ENCODE measurements at regions of chrX and their contacts with region 1.

Region 1: DNA sequence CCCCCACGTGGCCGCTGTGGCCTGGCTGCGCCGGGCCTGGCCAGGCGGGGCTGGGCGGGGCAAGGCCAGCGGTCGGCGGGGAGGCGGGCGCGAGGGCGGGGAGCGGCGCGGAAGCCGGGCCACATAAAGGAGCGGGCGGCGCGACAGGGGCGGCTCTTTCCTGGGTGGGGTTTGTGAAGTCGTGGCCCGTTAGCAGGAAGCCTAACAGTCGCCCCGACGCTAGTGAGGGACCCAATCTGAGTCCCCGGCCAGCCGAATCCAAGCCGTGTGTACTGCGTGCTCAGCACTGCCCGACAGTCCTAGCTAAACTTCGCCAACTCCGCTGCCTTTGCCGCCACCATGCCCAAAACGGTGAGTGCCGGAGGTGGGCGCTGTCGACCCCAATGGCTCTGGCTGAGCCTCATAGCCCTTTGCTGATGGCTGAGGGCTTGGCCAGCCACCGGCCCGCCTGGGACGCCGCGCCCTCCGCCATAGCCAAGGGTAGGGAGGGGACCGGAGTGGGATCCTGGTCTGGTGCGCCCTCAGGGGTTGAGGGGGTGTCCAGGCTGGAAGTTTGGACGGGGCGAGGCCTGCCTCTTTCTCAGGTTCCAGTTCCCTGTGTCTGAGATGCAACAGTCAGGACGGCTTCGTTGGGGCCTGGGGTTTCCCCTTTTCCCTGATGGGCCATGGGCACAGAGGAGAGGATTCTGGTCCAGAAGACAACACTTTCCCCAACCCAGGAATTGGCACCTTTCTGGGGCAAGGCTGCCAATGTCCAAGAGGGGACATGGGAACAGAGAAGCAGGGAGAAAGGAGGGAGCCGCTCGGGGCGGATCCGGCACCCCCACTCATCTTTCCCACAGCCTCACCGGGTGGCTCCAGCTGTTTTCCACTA is at the start of gene MSN:
- DNase-seq: peak; percentile 57
- H3K4me3 ChIP-seq: peak within 1 kb of the TSS; percentile 77
- H3K27ac ChIP-seq: peak within 1 kb of the TSS; percentile 93
- H3K4me1 ChIP-seq: peaks cover 20% of the 10 kb centered on the region
- H3K27me3 ChIP-seq: no peaks in the 10 kb centered on the region
- CTCF ChIP-seq: peak; percentile 33; the same call in 1 of the 2 replicates
- total RNA-seq, gene MSN: 415 and 468 TPM in 2 replicates

Region 2: DNA sequence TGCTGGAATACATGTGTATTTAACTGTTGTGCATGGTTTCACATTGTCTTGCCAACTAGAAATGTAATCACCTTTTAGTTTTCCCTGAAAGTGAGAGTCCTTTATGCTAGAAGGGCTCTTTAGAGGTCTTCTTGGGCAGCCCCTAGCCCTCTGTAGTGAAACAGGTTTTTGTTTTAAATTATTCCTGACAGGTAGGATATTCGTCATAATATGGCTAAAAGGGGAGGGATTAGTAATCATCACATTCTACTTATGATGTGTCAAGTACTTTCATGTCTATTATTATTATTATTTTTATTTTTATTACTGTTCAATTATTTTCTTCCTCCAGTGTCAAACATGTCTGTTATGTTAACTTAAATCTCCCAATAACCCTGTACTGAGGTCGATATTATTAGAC is 35.2 kb after region 1 on chrX:
- CTCF ChIA-PET with region 1: interaction called, 6 read pairs
- POLR2A ChIA-PET with region 1: no interaction called
- intact Hi-C with region 1: loop called (anchors 5 kb)
- DNase-seq: no peak
- H3K4me3 ChIP-seq: no peak overlapping the region
- H3K27ac ChIP-seq: peak overlapping the region; percentile 68
- H3K4me1 ChIP-seq: peaks cover 51% of the 10 kb centered on the region
- H3K27me3 ChIP-seq: no peaks in the 10 kb centered on the region
- CTCF ChIP-seq: no peak